Lower lobe of right lung (tissue), 2 donors: ENCODE measurements at regions of chr19 and their contacts with region 1.

Region 1: GRCh38 chr19:732148-733069 is 18.5 kb upstream of the MISP start:
- DNase-seq: no peak
- ATAC-seq: no peak
- H3K4me3 ChIP-seq: no peak overlapping the region
- H3K27ac ChIP-seq: no peak overlapping the region
- H3K4me1 ChIP-seq: peaks cover 9% of the 10 kb centered on the region
- H3K27me3 ChIP-seq: no peaks in the 10 kb centered on the region
- CTCF ChIP-seq: no peak

Region 2: GRCh38 chr19:664913-665443 is 67.4 kb before region 1 on chr19:
- intact Hi-C with region 1: loop called (anchors 5 kb)
- DNase-seq: peak; percentile 86
- ATAC-seq: peak; percentile 59 to 63
- H3K4me3 ChIP-seq: peak overlapping the region; percentile 34
- H3K27ac ChIP-seq: peak overlapping the region; percentile 53
- H3K4me1 ChIP-seq: peaks cover 39% of the 10 kb centered on the region
- H3K27me3 ChIP-seq: no peaks in the 10 kb centered on the region
- CTCF ChIP-seq: peak; percentile 92